ENCODE measurements at regions of chr14 and their contacts with region 1.

Region 1: DNA sequence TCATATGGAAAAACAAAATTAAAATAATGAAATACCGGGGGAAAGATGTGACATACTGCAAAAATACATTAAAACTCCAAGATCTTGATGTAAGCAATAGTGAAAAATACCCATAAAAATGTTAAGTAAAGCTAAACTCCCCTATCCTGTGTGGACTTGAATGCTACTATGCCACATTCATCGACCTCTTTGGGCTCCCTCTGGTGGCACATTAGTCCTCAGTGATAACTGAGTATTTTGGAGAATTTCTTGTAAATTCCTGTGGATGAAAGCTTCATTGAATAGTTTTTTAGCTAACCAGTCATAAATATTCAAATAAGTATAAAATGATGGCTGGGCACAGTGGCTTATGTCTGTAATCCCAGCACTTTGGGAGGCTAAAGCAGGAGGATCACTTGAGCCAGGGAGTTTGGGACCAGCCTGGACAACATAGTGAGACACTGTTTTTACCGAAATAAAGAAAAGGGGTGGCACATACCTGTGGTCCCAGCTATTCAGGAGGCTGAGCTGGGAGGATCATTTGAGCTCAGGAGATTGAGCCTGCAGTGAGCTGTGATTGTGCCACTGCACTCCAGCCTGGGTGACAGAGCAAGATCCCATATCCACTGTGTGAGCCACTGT is 42.4 kb upstream of the SGPP1 start:
- DNase-seq: peak; percentile 27 to 68 (median 44)
- H3K4me3 ChIP-seq: no peak overlapping the region
- H3K4me3 Mint-ChIP-seq: no peak overlapping the region
- H3K27ac ChIP-seq: no peak overlapping the region
- H3K27ac Mint-ChIP-seq: no peak overlapping the region
- H3K4me1 ChIP-seq: no peaks in the 10 kb centered on the region
- H3K4me1 Mint-ChIP-seq: peaks cover 2 to 6% (median 4%) of the 10 kb centered on the region in 3 donors
- H3K27me3 ChIP-seq: no peaks in the 10 kb centered on the region
- H3K27me3 Mint-ChIP-seq: no peaks in the 10 kb centered on the region

Region 2: GRCh38 chr14:63632932-63633514 is 137.3 kb before region 1 on chr14:
- CTCF ChIA-PET with region 1: interaction called, 38 read pairs
- POLR2A ChIA-PET with region 1: no interaction called
- DNase-seq: peak in 2 of 5 donors; percentile 43 to 48
- H3K4me3 ChIP-seq: no peak overlapping the region
- H3K4me3 Mint-ChIP-seq: no peak overlapping the region
- H3K27ac ChIP-seq: no peak overlapping the region
- H3K27ac Mint-ChIP-seq: peak overlapping the region in 1 of 8 donors; percentile 33
- H3K4me1 ChIP-seq: no peaks in the 10 kb centered on the region
- H3K4me1 Mint-ChIP-seq: peaks cover 42 to 55% (median 54%) of the 10 kb centered on the region in 3 donors
- H3K27me3 ChIP-seq: no peaks in the 10 kb centered on the region
- H3K27me3 Mint-ChIP-seq: no peaks in the 10 kb centered on the region

Region 3: GRCh38 chr14:63650256-63650952 is 119.9 kb before region 1 on chr14:
- CTCF ChIA-PET with region 1: interaction called, 13 read pairs
- POLR2A ChIA-PET with region 1: interaction called, 3 read pairs
- DNase-seq: peak; percentile 20 to 84 (median 67)
- H3K4me3 ChIP-seq: peak overlapping the region; percentile 1
- H3K4me3 Mint-ChIP-seq: peak overlapping the region; percentile 47 to 83 (median 71)
- H3K27ac ChIP-seq: peak overlapping the region; percentile 39
- H3K27ac Mint-ChIP-seq: peak overlapping the region; percentile 82 to 98 (median 97)
- H3K4me1 ChIP-seq: peaks cover 36% of the 10 kb centered on the region
- H3K4me1 Mint-ChIP-seq: peaks cover 23 to 38% (median 32%) of the 10 kb centered on the region in 3 donors
- H3K27me3 ChIP-seq: no peaks in the 10 kb centered on the region
- H3K27me3 Mint-ChIP-seq: no peaks in the 10 kb centered on the region

Region 4: GRCh38 chr14:63727774-63728728 is 42.2 kb before region 1 on chr14 and contains the start of gene SGPP1:
- CTCF ChIA-PET with region 1: interaction called, 10 read pairs
- POLR2A ChIA-PET with region 1: interaction called, 5 read pairs
- DNase-seq: peak; percentile 76 to 89 (median 81)
- H3K4me3 ChIP-seq: peak within 1 kb of the TSS; percentile 96
- H3K4me3 Mint-ChIP-seq: peak within 1 kb of the TSS; percentile 97 to 100 (median 99)
- H3K27ac ChIP-seq: peak within 1 kb of the TSS; percentile 68
- H3K27ac Mint-ChIP-seq: peak within 1 kb of the TSS; percentile 75 to 99 (median 98)
- H3K4me1 ChIP-seq: peaks cover 23% of the 10 kb centered on the region
- H3K4me1 Mint-ChIP-seq: peaks cover 36 to 49% (median 47%) of the 10 kb centered on the region in 3 donors
- H3K27me3 ChIP-seq: no peaks in the 10 kb centered on the region
- H3K27me3 Mint-ChIP-seq: peaks cover 0 to 4% of the 10 kb centered on the region in 2 donors
- total RNA-seq, gene SGPP1: 12.4 to 13.9 TPM

Measured in CD8-positive, alpha-beta memory T cell (primary cell).